BJ (cell line): ENCODE measurements at regions of chr1 and their contacts with region 1.

Region 1: GRCh38 chr1:205523891-205524793 is 19.7 kb downstream of the CDK18 start:
- DNase-seq: no peak
- H3K4me3 ChIP-seq: no peak overlapping the region
- H3K27me3 ChIP-seq: peaks cover 8% of the 10 kb centered on the region
- CTCF ChIP-seq: peak; percentile 76

Region 2: GRCh38 chr1:205321164-205321958 is 202.8 kb before region 1 on chr1 and contains the start of gene NUAK2:
- CTCF ChIA-PET with region 1: interaction called, 17 read pairs
- POLR2A ChIA-PET with region 1: no interaction called
- DNase-seq: no peak
- H3K4me3 ChIP-seq: peak within 1 kb of the TSS; percentile 84
- H3K27me3 ChIP-seq: no peaks in the 10 kb centered on the region; the same call in 1 of the 2 replicates
- CTCF ChIP-seq: peak; percentile 37; the same call in 1 of the 2 replicates
- polyA plus RNA-seq, gene NUAK2: 3.4 and 5.8 TPM in 2 replicates

Region 3: GRCh38 chr1:205335643-205336091 is 188.5 kb before region 1 on chr1:
- CTCF ChIA-PET with region 1: interaction called, 35 read pairs
- POLR2A ChIA-PET with region 1: no interaction called
- DNase-seq: no peak
- H3K4me3 ChIP-seq: no peak overlapping the region
- H3K27me3 ChIP-seq: peaks cover 28% of the 10 kb centered on the region
- CTCF ChIP-seq: peak; percentile 99

Region 4: GRCh38 chr1:205354259-205354904 is 169.8 kb before region 1 on chr1:
- CTCF ChIA-PET with region 1: interaction called, 77 read pairs
- POLR2A ChIA-PET with region 1: no interaction called
- DNase-seq: no peak
- H3K4me3 ChIP-seq: no peak overlapping the region
- H3K27me3 ChIP-seq: peaks cover 29% of the 10 kb centered on the region
- CTCF ChIP-seq: peak; percentile 88

Region 5: GRCh38 chr1:205536759-205537361 is 12.7 kb after region 1 on chr1:
- CTCF ChIA-PET with region 1: interaction called, 32 read pairs
- POLR2A ChIA-PET with region 1: no interaction called
- DNase-seq: no peak
- H3K4me3 ChIP-seq: no peak overlapping the region
- H3K27me3 ChIP-seq: no peaks in the 10 kb centered on the region; the same call in 1 of the 2 replicates
- CTCF ChIP-seq: no peak

Region 6: DNA sequence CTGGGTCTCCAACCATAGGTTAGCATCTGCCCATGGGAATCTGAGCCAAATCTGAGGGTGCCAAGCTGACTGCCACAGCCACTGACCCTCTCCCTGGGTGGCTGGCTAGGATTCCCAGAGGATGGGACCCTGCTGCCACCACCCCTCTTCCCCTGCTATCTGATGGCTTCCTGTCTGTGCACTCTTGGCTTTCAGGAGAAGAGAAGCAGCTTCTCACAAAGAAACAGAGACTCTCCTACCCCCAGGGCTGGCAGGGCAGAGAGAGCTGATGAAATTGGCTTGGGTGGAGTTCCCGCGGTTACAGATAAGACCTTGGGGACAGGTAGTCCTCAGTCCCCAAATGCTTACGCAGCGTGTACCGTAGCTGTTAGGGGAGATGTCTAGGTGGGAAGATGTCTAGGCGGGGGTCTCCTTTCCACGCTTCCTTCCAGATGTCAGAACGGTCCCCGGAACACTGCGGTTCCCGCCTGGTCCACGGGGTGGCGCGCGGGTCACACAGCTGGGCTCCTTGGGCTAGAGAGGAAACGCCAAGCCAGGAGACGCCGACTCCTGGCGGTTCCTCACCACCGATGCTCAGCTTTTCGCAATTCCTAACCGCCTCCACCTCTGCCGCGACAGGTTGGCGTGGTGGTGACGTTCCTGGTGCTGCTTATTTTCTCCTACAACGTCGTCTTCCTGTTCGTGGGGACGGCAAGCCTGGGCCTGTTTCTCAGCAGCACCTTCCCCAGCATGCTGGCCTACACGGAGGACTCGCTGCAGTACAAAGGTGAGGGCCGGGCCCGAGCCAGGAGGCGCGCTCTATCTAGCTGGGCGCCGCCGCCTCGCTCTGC is 67.6 kb after region 1 on chr1:
- CTCF ChIA-PET with region 1: interaction called, 18 read pairs
- POLR2A ChIA-PET with region 1: no interaction called
- DNase-seq: no peak
- H3K4me3 ChIP-seq: peak overlapping the region; percentile 37
- H3K27me3 ChIP-seq: no peaks in the 10 kb centered on the region
- CTCF ChIP-seq: peak; percentile 98

Region 7: DNA sequence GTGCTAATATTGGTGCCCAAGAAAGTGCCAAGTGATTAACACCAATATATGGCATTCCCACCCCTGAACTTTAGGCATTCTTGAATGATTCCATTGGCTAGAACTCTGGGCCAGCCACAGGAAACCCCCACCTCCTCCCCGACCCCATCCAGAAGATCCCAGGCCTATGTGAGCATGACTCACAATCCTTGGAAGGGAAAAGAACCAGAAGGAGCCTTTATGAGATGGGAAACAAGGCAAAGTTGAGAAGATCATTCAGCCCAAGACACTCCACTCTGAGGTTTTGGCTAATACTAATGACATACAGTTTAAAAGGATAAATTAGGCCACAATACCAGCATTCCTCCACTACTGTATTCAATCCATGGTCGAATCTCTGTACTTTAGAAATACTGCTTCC is 85.9 kb after region 1 on chr1:
- CTCF ChIA-PET with region 1: no interaction called
- POLR2A ChIA-PET with region 1: no interaction called
- DNase-seq: no peak
- H3K4me3 ChIP-seq: no peak overlapping the region
- H3K27me3 ChIP-seq: no peaks in the 10 kb centered on the region
- CTCF ChIP-seq: no peak

Region 8: DNA sequence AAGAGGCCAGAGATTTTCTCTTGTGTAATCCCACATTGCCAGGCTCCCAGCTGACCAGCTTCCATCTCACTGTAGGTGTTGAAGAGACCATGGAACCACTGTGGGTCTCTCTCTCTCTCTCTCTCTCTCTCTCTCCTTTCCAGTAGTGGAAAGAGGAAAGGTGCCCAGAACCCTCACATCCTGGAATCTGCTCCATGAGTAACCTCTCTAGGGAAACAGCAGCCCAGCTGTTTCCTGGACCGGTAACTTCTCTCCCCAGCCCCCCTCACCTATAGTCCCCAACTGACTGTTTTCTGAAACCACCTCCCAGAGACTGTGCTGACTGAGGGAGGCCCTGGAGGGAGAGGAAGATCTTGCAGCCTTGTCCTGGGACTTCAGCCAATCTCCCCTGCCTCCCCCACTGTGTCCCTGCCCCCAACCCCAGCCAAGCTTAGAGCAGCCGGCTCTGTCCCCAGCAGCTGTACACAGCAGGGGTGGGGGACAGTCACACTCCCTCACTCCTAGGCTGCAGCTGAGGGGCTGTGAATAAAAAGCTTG is 176.8 kb after region 1 on chr1:
- CTCF ChIA-PET with region 1: no interaction called
- POLR2A ChIA-PET with region 1: no interaction called
- DNase-seq: no peak
- H3K4me3 ChIP-seq: no peak overlapping the region
- H3K27me3 ChIP-seq: no peaks in the 10 kb centered on the region
- CTCF ChIP-seq: no peak

Region 9: GRCh38 chr1:205812878-205813754 is 289.0 kb after region 1 on chr1 and contains the start of gene SLC41A1:
- CTCF ChIA-PET with region 1: no interaction called
- POLR2A ChIA-PET with region 1: no interaction called
- DNase-seq: peak; percentile 55
- H3K4me3 ChIP-seq: peak within 1 kb of the TSS; percentile 88
- H3K27me3 ChIP-seq: no peaks in the 10 kb centered on the region
- CTCF ChIP-seq: no peak
- polyA plus RNA-seq, gene SLC41A1: 29.2 and 29.4 TPM in 2 replicates